MCF 10A (cell line): ENCODE measurements at regions of chr3 and their contacts with region 1.

Region 1: DNA sequence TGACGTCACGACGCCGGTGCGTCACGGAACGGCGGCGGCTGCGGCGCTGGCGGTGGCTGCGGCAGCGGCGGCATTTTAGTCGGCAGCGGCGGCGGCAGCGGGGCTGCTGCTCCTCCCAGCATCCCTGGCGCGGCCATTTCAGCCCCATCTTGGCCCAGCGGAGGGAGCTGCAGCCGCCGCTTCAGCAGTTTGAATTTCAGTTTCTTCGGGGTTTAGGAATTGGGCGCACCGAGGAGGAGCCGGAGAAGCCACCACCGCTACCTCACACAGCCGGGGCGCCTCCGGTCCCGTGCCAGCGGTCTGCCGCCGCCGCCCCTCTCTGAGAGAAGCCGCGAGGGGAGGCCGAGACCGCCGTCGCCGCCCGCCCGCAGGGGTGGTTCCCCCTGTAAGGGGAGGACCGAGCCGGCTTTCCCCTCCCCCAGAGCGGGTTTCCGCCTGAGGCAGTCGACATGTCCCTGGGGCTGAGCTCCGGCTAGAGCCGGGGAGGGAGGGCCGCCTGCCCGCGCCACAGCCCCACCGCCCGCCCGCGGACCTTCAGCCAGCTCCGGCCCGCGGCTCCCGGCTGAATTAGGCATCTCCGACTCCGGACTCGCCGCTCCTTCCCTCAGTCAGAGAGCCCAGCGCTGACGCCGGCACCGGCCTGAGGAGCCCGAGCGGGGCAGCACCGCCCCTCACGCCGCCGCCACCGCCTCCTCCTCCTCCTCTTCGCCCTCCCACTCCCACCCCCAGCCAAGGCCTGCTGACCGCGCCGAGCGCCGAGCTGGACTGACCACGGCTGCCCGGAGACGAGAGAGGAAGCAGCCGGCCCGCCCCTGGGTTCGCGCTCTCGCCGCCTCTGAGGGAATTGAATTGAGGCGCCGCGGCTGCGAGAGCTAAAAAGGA is at the start of gene TSC22D2:
- DNase-seq: peak; percentile 76
- H3K4me3 Mint-ChIP-seq: peak within 1 kb of the TSS; percentile 74
- H3K27ac Mint-ChIP-seq: peak within 1 kb of the TSS; percentile 99
- H3K4me1 Mint-ChIP-seq: peaks cover 17% of the 10 kb centered on the region
- H3K27me3 Mint-ChIP-seq: no peaks in the 10 kb centered on the region
- CTCF ChIP-seq: peak; percentile 10
- total RNA-seq, gene TSC22D2: 31.2 and 36.2 TPM in 2 replicates

Region 2: GRCh38 chr3:150238998-150239619 is 169.4 kb before region 1 on chr3:
- CTCF ChIA-PET with region 1: interaction called, 42 read pairs
- POLR2A ChIA-PET with region 1: interaction called, 59 read pairs
- intact Hi-C with region 1: loop called (anchors 2 kb)
- DNase-seq: peak; percentile 60
- H3K4me3 Mint-ChIP-seq: no peak overlapping the region
- H3K27ac Mint-ChIP-seq: peak overlapping the region; percentile 83
- H3K4me1 Mint-ChIP-seq: peaks cover 27% of the 10 kb centered on the region
- H3K27me3 Mint-ChIP-seq: no peaks in the 10 kb centered on the region
- CTCF ChIP-seq: peak; percentile 32

Region 3: DNA sequence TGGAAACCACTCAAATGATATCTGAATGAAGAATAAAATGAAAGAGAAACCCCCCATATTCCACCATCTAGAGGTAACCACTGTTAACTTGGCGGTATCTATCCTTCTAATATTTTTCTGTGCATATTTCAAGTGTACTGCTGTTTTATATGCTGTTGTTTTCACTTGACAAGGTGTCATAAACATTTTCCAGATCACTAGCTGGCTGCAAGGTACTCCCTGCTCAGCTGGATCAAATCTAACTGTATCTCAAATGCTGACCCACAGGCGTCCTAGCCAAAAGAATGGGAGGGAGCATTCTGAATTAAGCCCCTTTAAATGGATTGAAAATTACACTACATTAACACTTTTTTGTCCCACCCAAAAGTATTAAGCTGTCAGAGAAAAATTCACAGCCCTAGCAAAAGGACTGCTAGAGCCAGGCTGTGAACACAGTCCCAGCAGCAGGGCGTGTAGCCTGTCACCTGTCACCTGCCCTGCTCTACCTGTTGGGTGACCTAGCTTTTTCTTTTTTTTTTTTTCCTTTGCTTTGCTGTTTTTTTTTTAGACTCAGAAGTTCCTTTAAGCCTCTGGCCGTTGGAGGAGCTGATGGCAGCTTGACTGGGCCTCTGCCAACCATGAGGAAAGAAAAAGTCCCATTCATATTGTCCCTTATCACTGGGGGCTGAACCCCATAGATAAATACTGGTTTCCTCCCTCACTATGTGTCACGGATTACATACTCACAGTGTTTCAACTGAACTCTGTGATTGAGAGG is 94.0 kb before region 1 on chr3:
- CTCF ChIA-PET with region 1: interaction called, 10 read pairs
- POLR2A ChIA-PET with region 1: interaction called, 25 read pairs
- intact Hi-C with region 1: no loop called
- DNase-seq: no peak
- H3K4me3 Mint-ChIP-seq: no peak overlapping the region
- H3K27ac Mint-ChIP-seq: no peak overlapping the region
- H3K4me1 Mint-ChIP-seq: peaks cover 5% of the 10 kb centered on the region
- H3K27me3 Mint-ChIP-seq: no peaks in the 10 kb centered on the region
- CTCF ChIP-seq: no peak

Region 4: GRCh38 chr3:150365132-150365604 is 43.3 kb before region 1 on chr3:
- CTCF ChIA-PET with region 1: interaction called, 7 read pairs
- POLR2A ChIA-PET with region 1: interaction called, 41 read pairs
- intact Hi-C with region 1: loop called (anchors 1 kb)
- DNase-seq: peak; percentile 69
- H3K4me3 Mint-ChIP-seq: no peak overlapping the region
- H3K27ac Mint-ChIP-seq: peak overlapping the region; percentile 47
- H3K4me1 Mint-ChIP-seq: peaks cover 21% of the 10 kb centered on the region
- H3K27me3 Mint-ChIP-seq: no peaks in the 10 kb centered on the region
- CTCF ChIP-seq: no peak

Region 5: DNA sequence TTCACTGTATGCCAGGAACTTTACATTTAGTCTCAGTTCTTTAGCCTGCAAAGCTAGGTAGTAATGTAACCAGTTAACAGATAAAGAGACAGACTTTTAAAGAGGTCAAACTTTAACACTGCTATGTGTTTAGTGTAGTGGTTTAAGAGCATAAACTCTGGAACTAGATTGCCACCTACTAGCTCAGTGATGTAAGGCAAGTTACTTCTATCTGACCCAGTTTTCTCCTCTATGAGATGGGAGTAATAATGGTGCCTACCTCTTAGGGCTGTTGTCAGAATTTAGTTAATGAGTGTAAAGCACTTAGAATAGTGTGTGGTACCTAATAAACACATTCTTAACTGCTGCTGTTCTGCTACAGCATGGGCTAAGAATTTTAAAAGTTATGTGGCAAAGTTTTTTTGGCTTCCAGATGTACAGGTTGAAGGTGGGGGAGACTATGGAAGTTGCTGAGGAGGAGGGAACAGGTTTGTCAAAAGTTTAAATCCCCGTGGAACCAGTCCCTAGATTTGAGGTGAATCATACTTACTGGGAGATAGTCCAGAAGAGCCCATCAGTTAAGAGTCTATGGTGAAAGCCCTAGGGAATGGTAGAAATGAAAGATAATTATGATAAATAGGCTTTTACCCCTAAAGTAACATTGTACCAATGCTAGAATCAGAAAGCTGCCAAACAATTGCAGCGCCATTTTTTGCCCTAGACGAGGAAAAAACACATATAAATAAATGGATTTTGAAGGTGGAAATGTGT is 13.5 kb after region 1 on chr3:
- CTCF ChIA-PET with region 1: interaction called, 5 read pairs
- POLR2A ChIA-PET with region 1: interaction called, 47 read pairs
- intact Hi-C with region 1: no loop called
- DNase-seq: peak; percentile 46
- H3K4me3 Mint-ChIP-seq: no peak overlapping the region
- H3K27ac Mint-ChIP-seq: no peak overlapping the region
- H3K4me1 Mint-ChIP-seq: peaks cover 44% of the 10 kb centered on the region
- H3K27me3 Mint-ChIP-seq: no peaks in the 10 kb centered on the region
- CTCF ChIP-seq: no peak

Region 6: DNA sequence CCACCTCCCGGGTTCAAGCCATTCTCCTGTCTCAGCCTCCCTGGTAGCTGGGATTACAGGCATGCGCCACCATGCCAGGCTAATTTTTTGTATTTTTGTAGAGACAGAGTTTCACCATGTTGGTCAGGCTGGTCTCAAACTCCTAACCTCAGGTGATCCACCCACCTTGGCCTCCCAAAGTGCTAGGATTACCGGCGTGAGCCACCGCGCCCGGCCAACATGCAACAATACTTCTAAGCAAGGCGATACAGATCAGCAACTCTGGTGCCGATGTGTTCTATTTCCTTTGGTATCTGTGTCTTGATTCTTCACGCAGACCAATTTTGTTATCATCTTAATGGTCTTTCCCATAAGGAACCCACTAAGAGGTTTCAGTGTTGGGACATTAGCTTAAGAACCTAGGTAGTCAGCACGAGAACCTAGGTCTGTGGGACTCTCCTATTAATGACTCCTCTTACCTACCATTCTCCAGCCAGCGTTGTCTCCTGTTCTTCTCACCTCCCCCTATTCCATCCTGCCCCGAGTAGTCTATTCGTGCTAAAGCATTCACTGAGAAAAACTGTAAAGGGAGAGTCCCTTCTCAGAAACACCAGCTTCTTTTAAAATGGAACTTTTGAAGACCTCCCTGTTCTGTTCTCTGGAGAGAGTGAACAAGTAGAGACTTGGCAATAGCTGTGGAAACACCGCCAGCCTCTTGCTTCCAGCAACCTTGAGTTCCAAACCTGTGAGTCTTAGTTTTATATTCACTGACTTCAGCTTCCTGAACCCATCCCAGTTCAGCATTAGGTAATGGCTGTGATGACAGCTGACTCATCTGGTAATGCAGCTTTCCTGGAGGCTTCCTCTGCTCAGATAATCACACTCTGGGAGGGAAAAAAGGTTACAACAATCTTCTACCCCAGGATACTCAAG is 60.8 kb after region 1 on chr3:
- CTCF ChIA-PET with region 1: interaction called, 22 read pairs
- POLR2A ChIA-PET with region 1: interaction called, 103 read pairs
- intact Hi-C with region 1: loop called (anchors 5 kb)
- DNase-seq: peak; percentile 96
- H3K4me3 Mint-ChIP-seq: peak overlapping the region; percentile 70
- H3K27ac Mint-ChIP-seq: peak overlapping the region; percentile 93
- H3K4me1 Mint-ChIP-seq: peaks cover 28% of the 10 kb centered on the region
- H3K27me3 Mint-ChIP-seq: no peaks in the 10 kb centered on the region
- CTCF ChIP-seq: no peak